ENCODE measurements at regions of chr20 and their contacts with region 1.

Region 1: GRCh38 chr20:49888345-49888966 is 26.9 kb downstream of the SPATA2 start:
- DNase-seq: peak; percentile 69
- ATAC-seq: peak; percentile 66
- H3K4me3 ChIP-seq: no peak overlapping the region
- H3K27ac ChIP-seq: no peak overlapping the region
- H3K4me1 ChIP-seq: peaks cover 14% of the 10 kb centered on the region
- H3K27me3 ChIP-seq: no peaks in the 10 kb centered on the region
- CTCF ChIP-seq: peak; percentile 89
- EP300 ChIP-seq: no peak
- POLR2A ChIP-seq: no peak
- RAD21 ChIP-seq: peak; percentile 91

Region 2: GRCh38 chr20:49344975-49345374 is 543.5 kb before region 1 on chr20:
- CTCF ChIA-PET with region 1: no interaction called
- POLR2A ChIA-PET with region 1: no interaction called
- in situ Hi-C with region 1: loop called (anchors 25 kb)
- intact Hi-C with region 1: no loop called
- DNase-seq: no peak
- ATAC-seq: no peak
- H3K4me3 ChIP-seq: no peak overlapping the region
- H3K27ac ChIP-seq: no peak overlapping the region
- H3K4me1 ChIP-seq: no peaks in the 10 kb centered on the region
- H3K27me3 ChIP-seq: peaks cover 6 to 38% of the 10 kb centered on the region in 2 experiments; a peak in 3 of 5 replicates
- CTCF ChIP-seq: no peak
- EP300 ChIP-seq: no peak
- POLR2A ChIP-seq: no peak
- RAD21 ChIP-seq: no peak

Region 3: DNA sequence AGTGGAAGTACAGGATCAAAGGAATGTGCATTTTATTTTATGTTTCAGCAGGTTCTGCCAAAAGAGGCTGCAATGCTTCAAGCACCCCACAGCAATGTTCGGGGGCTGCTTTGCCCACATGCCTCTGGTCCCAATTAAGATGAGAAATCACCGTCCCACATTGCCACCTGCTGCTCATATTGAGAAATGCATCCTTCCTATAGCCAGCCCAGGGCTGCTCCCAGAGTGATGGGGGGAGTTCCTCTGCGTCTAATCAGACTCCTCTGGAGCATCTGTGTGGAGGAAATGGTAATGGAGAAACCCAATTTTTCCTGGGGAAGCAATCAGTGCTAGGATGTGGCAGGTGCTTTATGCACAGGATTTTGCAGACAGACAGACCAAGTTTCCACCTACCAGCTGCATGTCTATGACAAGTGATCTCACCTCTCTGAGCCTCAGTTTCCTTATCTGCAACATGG is 354.2 kb before region 1 on chr20:
- CTCF ChIA-PET with region 1: no interaction called
- POLR2A ChIA-PET with region 1: no interaction called
- in situ Hi-C with region 1: no loop called
- intact Hi-C with region 1: loop called (anchors 1 kb)
- DNase-seq: peak; percentile 63
- ATAC-seq: peak; percentile 87
- H3K4me3 ChIP-seq: no peak overlapping the region
- H3K27ac ChIP-seq: no peak overlapping the region
- H3K4me1 ChIP-seq: no peaks in the 10 kb centered on the region
- H3K27me3 ChIP-seq: peaks cover 0 to 1% of the 10 kb centered on the region in 2 experiments; a peak in 1 of 5 replicates
- CTCF ChIP-seq: peak; percentile 91
- EP300 ChIP-seq: no peak
- POLR2A ChIP-seq: no peak
- RAD21 ChIP-seq: peak; percentile 65

Region 4: GRCh38 chr20:49541733-49542513 is 346.5 kb before region 1 on chr20:
- CTCF ChIA-PET with region 1: interaction called, 14 read pairs
- POLR2A ChIA-PET with region 1: no interaction called
- in situ Hi-C with region 1: no loop called
- intact Hi-C with region 1: loop called (anchors 1 kb)
- DNase-seq: peak; percentile 90
- ATAC-seq: peak; percentile 78
- H3K4me3 ChIP-seq: no peak overlapping the region
- H3K27ac ChIP-seq: no peak overlapping the region
- H3K4me1 ChIP-seq: peaks cover 13% of the 10 kb centered on the region
- H3K27me3 ChIP-seq: peaks cover 5 to 19% of the 10 kb centered on the region in 2 experiments; a peak in 3 of 5 replicates
- CTCF ChIP-seq: peak; percentile 99
- EP300 ChIP-seq: 0 out of 4 replicates have a peak, but pooled peaks of 1 of the 2 experiments have one; percentile 8
- POLR2A ChIP-seq: no peak
- RAD21 ChIP-seq: peak; percentile 97

Region 5: GRCh38 chr20:49846206-49846807 is 42.1 kb before region 1 on chr20:
- CTCF ChIA-PET with region 1: no interaction called
- POLR2A ChIA-PET with region 1: no interaction called
- in situ Hi-C with region 1: no loop called
- intact Hi-C with region 1: loop called (anchors 1 kb)
- DNase-seq: peak; percentile 73
- ATAC-seq: peak; percentile 94
- H3K4me3 ChIP-seq: no peak overlapping the region
- H3K27ac ChIP-seq: no peak overlapping the region
- H3K4me1 ChIP-seq: no peaks in the 10 kb centered on the region
- H3K27me3 ChIP-seq: no peaks in the 10 kb centered on the region
- CTCF ChIP-seq: peak; percentile 80
- EP300 ChIP-seq: no peak
- POLR2A ChIP-seq: no peak
- RAD21 ChIP-seq: peak; percentile 88

Region 6: DNA sequence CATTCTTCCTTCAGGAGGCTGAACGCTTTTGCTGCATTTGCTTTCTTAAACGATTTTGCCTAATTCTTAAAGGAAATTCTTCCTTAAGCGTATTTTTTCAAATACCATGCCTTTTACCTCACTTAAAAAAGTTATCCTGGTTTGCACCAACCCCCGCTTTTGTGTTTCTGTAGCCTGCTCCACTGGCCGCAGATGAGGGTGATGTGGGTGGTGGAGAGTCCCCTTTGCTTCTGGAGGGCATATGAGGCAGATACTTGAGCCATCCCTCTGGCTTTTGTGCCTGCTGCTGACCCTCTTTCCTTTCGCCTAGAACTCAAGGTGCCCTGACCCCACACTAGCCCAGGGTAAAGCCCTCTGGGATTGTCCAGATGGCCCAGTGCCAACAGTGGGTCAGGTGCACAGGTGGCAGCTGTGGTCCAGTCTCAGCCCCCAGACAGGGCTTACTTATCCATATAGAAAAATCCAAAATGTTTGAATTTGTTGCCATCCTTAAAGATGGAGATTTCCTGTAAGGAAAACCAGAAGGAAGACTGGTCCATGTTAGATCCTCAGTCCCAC is 17.0 kb before region 1 on chr20:
- CTCF ChIA-PET with region 1: no interaction called
- POLR2A ChIA-PET with region 1: no interaction called
- in situ Hi-C with region 1: no loop called
- intact Hi-C with region 1: no loop called
- DNase-seq: no peak
- ATAC-seq: no peak
- H3K4me3 ChIP-seq: no peak overlapping the region
- H3K27ac ChIP-seq: no peak overlapping the region
- H3K4me1 ChIP-seq: peaks cover 17% of the 10 kb centered on the region
- H3K27me3 ChIP-seq: no peaks in the 10 kb centered on the region
- CTCF ChIP-seq: no peak
- EP300 ChIP-seq: no peak
- POLR2A ChIP-seq: no peak
- RAD21 ChIP-seq: no peak

Region 7: GRCh38 chr20:49928401-49929141 is 40.1 kb after region 1 on chr20:
- CTCF ChIA-PET with region 1: interaction called, 23 read pairs
- POLR2A ChIA-PET with region 1: no interaction called
- in situ Hi-C with region 1: no loop called
- intact Hi-C with region 1: loop called (anchors 2 kb)
- DNase-seq: peak; percentile 86
- ATAC-seq: peak; percentile 89
- H3K4me3 ChIP-seq: peak overlapping the region in 1 of 3 experiments; percentile 36; a peak in 2 of 6 replicates
- H3K27ac ChIP-seq: no peak overlapping the region
- H3K4me1 ChIP-seq: peaks cover 44% of the 10 kb centered on the region
- H3K27me3 ChIP-seq: no peaks in the 10 kb centered on the region
- CTCF ChIP-seq: peak; percentile 92
- EP300 ChIP-seq: peak in 1 of 2 experiments; percentile 56; a peak in 1 of 4 replicates
- POLR2A ChIP-seq: no peak
- RAD21 ChIP-seq: peak; percentile 94

Measured in HepG2 (cell line).